HepG2 (cell line): ENCODE measurements at regions of chr12 and their contacts with region 1.

Region 1: GRCh38 chr12:23204933-23205778 is 580.2 kb downstream of the ETNK1 start:
- DNase-seq: peak; percentile 54
- ATAC-seq: peak; percentile 74
- H3K4me3 ChIP-seq: no peak overlapping the region
- H3K27ac ChIP-seq: no peak overlapping the region
- H3K4me1 ChIP-seq: no peaks in the 10 kb centered on the region
- H3K27me3 ChIP-seq: peaks cover 0 to 1% of the 10 kb centered on the region in 2 experiments; a peak in 1 of 5 replicates
- CTCF ChIP-seq: peak; percentile 85
- EP300 ChIP-seq: no peak
- POLR2A ChIP-seq: no peak
- RAD21 ChIP-seq: no peak; the same call in 1 of the 2 replicates

Region 2: GRCh38 chr12:22858849-22859570 is 346.1 kb before region 1 on chr12:
- CTCF ChIA-PET with region 1: no interaction called
- POLR2A ChIA-PET with region 1: no interaction called
- in situ Hi-C with region 1: no loop called
- intact Hi-C with region 1: no loop called
- DNase-seq: no peak
- ATAC-seq: no peak
- H3K4me3 ChIP-seq: no peak overlapping the region
- H3K27ac ChIP-seq: no peak overlapping the region
- H3K4me1 ChIP-seq: no peaks in the 10 kb centered on the region
- H3K27me3 ChIP-seq: no peaks in the 10 kb centered on the region; a peak in 1 of 5 replicates
- CTCF ChIP-seq: no peak
- EP300 ChIP-seq: no peak
- POLR2A ChIP-seq: no peak
- RAD21 ChIP-seq: no peak

Region 3: DNA sequence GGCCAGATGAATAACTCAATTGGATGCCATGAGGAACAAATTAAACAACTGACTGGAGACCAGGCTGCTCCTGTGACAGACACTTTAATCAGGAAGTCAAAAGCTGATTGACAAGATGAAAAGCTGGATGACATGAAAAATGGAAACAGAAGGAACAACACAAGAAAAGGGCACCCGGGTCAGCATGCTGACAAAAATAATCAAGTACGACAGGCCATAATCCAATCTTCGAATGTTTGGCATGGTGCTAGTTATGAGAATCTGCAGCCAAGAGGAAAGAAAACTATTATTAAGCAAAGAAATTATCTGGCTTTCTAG is 35.5 kb before region 1 on chr12:
- CTCF ChIA-PET with region 1: no interaction called
- POLR2A ChIA-PET with region 1: no interaction called
- in situ Hi-C with region 1: no loop called
- intact Hi-C with region 1: no loop called
- DNase-seq: no peak
- ATAC-seq: no peak
- H3K4me3 ChIP-seq: no peak overlapping the region
- H3K27ac ChIP-seq: no peak overlapping the region
- H3K4me1 ChIP-seq: no peaks in the 10 kb centered on the region
- H3K27me3 ChIP-seq: no peaks in the 10 kb centered on the region
- CTCF ChIP-seq: no peak
- EP300 ChIP-seq: no peak
- POLR2A ChIP-seq: no peak
- RAD21 ChIP-seq: no peak

Region 4: DNA sequence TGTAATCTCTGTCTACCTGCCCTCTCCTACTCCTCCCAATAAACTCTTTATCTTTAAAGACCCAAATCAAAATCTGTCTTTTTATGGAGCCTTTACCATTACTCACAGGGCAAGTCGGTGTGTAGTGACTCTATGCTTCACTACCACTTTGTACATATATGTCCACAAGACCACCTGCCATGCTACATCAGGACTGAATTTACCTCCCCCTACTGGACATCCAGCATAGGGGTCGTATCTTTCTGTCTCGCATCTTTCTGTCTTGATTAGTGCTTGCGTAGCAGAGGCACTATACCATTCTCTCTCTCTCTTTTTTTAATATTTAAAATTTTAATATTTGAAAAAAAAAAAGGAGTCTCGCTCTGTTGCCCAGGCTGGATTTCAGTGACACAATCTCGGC is 156.8 kb after region 1 on chr12:
- CTCF ChIA-PET with region 1: no interaction called
- POLR2A ChIA-PET with region 1: no interaction called
- in situ Hi-C with region 1: no loop called
- intact Hi-C with region 1: loop called (anchors 1 kb)
- DNase-seq: no peak
- ATAC-seq: peak; percentile 35; the same call in 1 of the 3 replicates
- H3K4me3 ChIP-seq: no peak overlapping the region
- H3K27ac ChIP-seq: no peak overlapping the region
- H3K4me1 ChIP-seq: no peaks in the 10 kb centered on the region
- H3K27me3 ChIP-seq: no peaks in the 10 kb centered on the region; a peak in 1 of 5 replicates
- CTCF ChIP-seq: no peak
- EP300 ChIP-seq: no peak
- POLR2A ChIP-seq: no peak
- RAD21 ChIP-seq: no peak

Region 5: GRCh38 chr12:23376238-23376637 is 171.1 kb after region 1 on chr12:
- CTCF ChIA-PET with region 1: interaction called, 3 read pairs
- POLR2A ChIA-PET with region 1: no interaction called
- in situ Hi-C with region 1: no loop called
- intact Hi-C with region 1: loop called (anchors 1 kb)
- DNase-seq: peak; percentile 2
- ATAC-seq: peak; percentile 88
- H3K4me3 ChIP-seq: no peak overlapping the region
- H3K27ac ChIP-seq: no peak overlapping the region
- H3K4me1 ChIP-seq: peaks cover 11% of the 10 kb centered on the region
- H3K27me3 ChIP-seq: no peaks in the 10 kb centered on the region
- CTCF ChIP-seq: peak; percentile 54
- EP300 ChIP-seq: no peak
- POLR2A ChIP-seq: no peak
- RAD21 ChIP-seq: no peak; the same call in 1 of the 2 replicates

Region 6: DNA sequence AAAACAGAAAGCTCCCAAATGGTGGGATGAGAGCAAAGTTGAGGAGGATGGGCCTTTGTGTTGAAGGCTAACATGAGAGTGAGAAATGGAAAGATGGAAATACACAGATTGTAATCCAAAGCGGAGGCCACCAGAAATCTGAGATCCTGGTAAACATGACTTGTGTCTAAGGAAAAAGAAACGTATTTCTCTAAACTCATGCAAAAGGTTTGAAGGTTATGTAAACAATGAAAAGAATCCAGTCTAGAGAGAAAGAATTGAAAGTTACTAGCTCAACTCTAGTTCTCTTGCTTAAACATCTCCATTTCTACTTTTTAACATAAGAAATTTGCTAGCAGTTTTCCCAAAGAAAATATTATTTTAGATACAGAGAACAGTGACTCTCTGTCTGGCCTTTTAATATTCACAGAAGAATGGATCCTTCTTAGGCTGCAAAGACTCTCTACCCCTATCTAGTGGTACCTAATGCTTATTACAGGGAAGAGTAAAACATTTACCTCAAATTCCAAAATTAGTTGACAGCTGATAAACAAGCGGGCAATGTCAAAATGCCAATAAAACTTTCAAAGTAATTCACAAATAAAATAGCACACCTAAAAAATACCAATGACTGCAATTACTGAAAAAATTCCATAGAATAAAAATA is 820.1 kb after region 1 on chr12:
- CTCF ChIA-PET with region 1: no interaction called
- POLR2A ChIA-PET with region 1: no interaction called
- in situ Hi-C with region 1: no loop called
- intact Hi-C with region 1: loop called (anchors 10 kb)
- DNase-seq: peak; percentile 84
- ATAC-seq: peak; percentile 87
- H3K4me3 ChIP-seq: peak overlapping the region in 2 of 3 experiments; percentile 50 to 53; a peak in 2 of 6 replicates
- H3K27ac ChIP-seq: peak overlapping the region; percentile 72
- H3K4me1 ChIP-seq: peaks cover 71% of the 10 kb centered on the region
- H3K27me3 ChIP-seq: no peaks in the 10 kb centered on the region; a peak in 1 of 5 replicates
- CTCF ChIP-seq: peak; percentile 54
- EP300 ChIP-seq: peak in 1 of 2 experiments; percentile 74; a peak in 2 of 4 replicates
- POLR2A ChIP-seq: no peak
- RAD21 ChIP-seq: no peak

Region 7: GRCh38 chr12:24596768-24597388 is 1391.7 kb after region 1 on chr12:
- CTCF ChIA-PET with region 1: no interaction called
- POLR2A ChIA-PET with region 1: no interaction called
- in situ Hi-C with region 1: no loop called
- intact Hi-C with region 1: loop called (anchors 5 kb)
- DNase-seq: peak; percentile 24
- ATAC-seq: no peak
- H3K4me3 ChIP-seq: no peak overlapping the region
- H3K27ac ChIP-seq: no peak overlapping the region
- H3K4me1 ChIP-seq: no peaks in the 10 kb centered on the region
- H3K27me3 ChIP-seq: no peaks in the 10 kb centered on the region; a peak in 1 of 5 replicates
- CTCF ChIP-seq: peak; percentile 71
- EP300 ChIP-seq: no peak
- POLR2A ChIP-seq: no peak
- RAD21 ChIP-seq: no peak

Region 8: DNA sequence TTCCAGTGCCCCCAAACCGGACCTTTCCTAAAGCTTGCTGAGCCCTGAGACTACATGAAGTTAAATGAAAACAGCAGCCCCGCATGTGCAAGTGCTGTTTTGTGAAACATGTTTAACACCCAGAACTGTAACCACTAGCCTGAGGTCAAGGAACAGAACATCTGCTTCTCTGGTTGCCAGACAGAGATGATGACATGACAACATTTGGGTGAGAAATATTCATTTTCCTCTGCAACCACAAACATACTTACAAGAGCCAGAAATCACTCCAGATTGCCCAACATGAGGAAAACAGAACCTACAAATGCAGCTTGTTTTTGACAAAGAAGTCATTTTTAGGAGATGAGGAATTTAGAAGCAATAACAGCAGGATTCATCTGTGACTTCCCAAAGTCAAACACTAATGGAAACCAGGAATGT is 1633.4 kb after region 1 on chr12:
- CTCF ChIA-PET with region 1: no interaction called
- POLR2A ChIA-PET with region 1: no interaction called
- in situ Hi-C with region 1: no loop called
- intact Hi-C with region 1: loop called (anchors 1 kb)
- DNase-seq: no peak
- ATAC-seq: no peak
- H3K4me3 ChIP-seq: no peak overlapping the region
- H3K27ac ChIP-seq: no peak overlapping the region
- H3K4me1 ChIP-seq: no peaks in the 10 kb centered on the region
- H3K27me3 ChIP-seq: no peaks in the 10 kb centered on the region
- CTCF ChIP-seq: no peak
- EP300 ChIP-seq: no peak
- POLR2A ChIP-seq: no peak
- RAD21 ChIP-seq: no peak